Mammary epithelial cell (primary cell): ENCODE measurements at regions of chr10 and their contacts with region 1.

Region 1: DNA sequence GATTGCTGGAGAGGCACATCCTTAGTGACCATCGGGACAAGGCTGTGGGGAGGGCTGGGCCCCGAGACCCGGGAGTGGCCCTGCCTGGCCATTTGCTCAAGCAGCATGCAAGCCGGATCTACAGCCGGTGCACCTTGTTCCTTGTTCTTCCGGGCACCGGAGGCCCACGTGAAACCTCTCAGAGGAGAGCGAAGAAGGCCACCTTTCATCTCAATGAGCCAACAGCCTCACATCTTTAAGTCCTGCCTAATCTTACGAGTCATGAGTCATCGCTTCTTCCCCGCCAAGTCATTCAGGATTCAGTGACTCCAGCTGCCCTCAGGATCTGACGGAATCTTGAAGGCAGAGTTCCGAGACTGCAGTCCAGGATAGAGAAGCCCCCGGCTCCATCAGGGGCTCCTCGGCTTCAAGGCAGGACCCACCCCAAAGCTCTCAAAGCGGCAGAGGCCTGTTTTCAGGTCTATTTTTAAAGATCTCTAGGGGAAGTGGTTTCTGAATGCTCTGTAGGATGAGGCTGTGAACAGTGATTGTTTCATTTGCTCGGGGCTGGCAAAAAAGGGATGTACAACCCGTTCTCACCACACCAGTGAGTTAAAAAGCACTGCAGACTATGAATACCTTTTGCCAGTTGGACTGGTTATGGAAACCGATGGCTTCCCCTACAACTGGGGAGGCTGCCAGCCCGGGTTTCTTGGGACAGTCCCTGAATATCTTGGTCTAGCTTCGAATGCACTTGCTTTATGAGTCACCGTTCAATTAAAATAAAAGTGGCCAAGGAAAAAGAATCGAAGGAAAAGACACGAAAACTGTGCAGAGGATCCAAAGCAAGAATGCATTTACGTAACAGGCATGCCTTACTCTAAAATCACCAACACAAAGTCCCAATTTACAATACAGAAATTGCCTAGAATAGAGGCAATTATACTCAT is 57.2 kb upstream of the ECHDC3 start:
- DNase-seq: peak; percentile 92
- H3K4me3 ChIP-seq: peak overlapping the region; percentile 33 to 44 (median 41)
- H3K27ac ChIP-seq: peak overlapping the region; percentile 72
- H3K4me1 ChIP-seq: peaks cover 31% of the 10 kb centered on the region
- H3K27me3 ChIP-seq: no peaks in the 10 kb centered on the region
- CTCF ChIP-seq: no peak

Region 2: DNA sequence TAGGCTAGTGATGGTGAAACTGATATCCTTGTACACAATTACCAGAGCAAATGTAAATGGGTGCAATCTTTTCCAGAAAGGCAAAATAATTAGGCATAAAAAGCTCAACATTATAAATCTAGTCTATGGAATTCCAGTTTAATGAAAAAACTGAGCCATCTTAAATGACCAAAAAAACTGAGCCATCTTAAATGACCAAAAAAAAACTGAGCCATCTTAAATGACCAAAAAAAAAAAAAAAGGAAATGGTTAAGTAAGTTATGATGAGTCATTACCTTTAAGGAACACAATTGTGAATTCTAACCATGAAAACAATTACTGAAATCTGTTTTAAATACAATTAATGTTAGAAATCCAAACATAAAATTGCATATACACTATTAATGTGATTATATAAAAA is 98.8 kb before region 1 on chr10:
- CTCF ChIA-PET with region 1: no interaction called
- dilution Hi-C with region 1: no loop called
- in situ Hi-C with region 1: no loop called
- intact Hi-C with region 1: no loop called
- DNase-seq: no peak
- H3K4me3 ChIP-seq: no peak overlapping the region
- H3K27ac ChIP-seq: no peak overlapping the region
- H3K4me1 ChIP-seq: no peaks in the 10 kb centered on the region
- H3K27me3 ChIP-seq: no peaks in the 10 kb centered on the region
- CTCF ChIP-seq: no peak

Region 3: DNA sequence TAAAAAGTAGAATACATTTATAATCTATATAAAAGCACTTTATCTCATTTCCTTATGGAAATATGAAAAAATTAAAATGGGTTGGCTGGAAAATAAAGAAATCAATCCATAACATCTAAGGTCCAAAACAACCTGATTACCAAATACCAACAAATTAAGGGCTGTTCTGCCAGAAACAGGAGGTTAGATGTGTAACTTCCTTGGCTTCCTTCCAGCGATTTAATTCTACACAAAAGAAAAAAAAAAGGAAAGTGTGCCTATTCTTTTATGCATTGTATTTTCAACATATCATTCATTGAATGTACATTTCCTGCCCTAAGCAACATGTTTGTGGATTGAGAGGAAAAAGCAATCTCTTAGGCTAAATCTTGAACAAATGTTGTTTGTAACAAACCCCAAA is 37.3 kb before region 1 on chr10:
- CTCF ChIA-PET with region 1: interaction called, 10 read pairs
- dilution Hi-C with region 1: no loop called
- in situ Hi-C with region 1: no loop called
- intact Hi-C with region 1: no loop called
- DNase-seq: no peak
- H3K4me3 ChIP-seq: no peak overlapping the region
- H3K27ac ChIP-seq: no peak overlapping the region
- H3K4me1 ChIP-seq: no peaks in the 10 kb centered on the region
- H3K27me3 ChIP-seq: no peaks in the 10 kb centered on the region
- CTCF ChIP-seq: no peak

Region 4: DNA sequence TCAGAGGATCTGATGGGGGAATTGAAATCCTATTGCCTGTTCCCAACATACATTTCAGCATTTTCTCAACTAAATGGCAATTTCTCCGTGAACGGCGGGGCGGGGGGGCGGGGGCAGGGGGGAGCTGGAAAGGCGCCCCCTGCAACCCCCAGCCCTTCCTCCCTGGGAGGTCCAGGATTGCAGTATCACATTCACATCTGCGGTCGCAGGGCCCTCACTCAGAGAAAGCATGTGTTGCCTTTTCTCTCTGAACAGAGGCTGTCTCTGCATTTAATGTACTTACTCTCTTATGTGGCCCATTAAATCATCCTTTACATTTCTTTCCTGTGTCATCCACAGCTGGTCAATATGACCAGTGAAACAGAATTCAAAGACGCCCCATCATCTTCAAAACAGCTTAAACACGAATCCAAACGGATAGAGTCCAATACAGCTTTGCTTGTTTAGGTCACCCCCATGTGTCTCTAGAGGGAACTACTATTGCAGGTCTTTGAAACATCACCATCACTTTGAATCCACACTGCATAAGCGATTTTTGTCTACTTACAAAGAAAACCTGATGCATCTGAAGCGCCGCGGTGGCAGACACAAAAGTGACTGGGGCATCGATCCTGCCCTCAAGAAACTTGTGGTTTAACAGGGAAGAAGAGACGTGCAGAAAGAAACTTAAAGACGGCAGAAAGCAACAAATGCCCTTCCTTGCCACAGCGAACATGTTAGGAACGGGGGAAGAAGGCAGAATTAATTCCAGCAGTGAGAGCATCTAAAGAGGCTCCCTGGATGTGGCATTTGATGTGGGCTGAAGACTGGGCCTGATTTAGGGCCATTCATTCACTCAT is 40.2 kb after region 1 on chr10:
- CTCF ChIA-PET with region 1: interaction called, 4 read pairs
- dilution Hi-C with region 1: loop called (anchors 5 kb)
- in situ Hi-C with region 1: no loop called
- intact Hi-C with region 1: no loop called
- DNase-seq: peak; percentile 44
- H3K4me3 ChIP-seq: no peak overlapping the region
- H3K27ac ChIP-seq: no peak overlapping the region
- H3K4me1 ChIP-seq: no peaks in the 10 kb centered on the region
- H3K27me3 ChIP-seq: peaks cover 1% of the 10 kb centered on the region
- CTCF ChIP-seq: peak; percentile 65 to 86

Region 5: GRCh38 chr10:11776097-11776496 is 91.1 kb after region 1 on chr10:
- CTCF ChIA-PET with region 1: no interaction called
- dilution Hi-C with region 1: no loop called
- in situ Hi-C with region 1: no loop called
- intact Hi-C with region 1: no loop called
- DNase-seq: peak; percentile 40
- H3K4me3 ChIP-seq: no peak overlapping the region
- H3K27ac ChIP-seq: no peak overlapping the region
- H3K4me1 ChIP-seq: no peaks in the 10 kb centered on the region
- H3K27me3 ChIP-seq: no peaks in the 10 kb centered on the region
- CTCF ChIP-seq: no peak